MCF 10A (cell line): ENCODE measurements at regions of chr16 and their contacts with region 1.

Region 1: DNA sequence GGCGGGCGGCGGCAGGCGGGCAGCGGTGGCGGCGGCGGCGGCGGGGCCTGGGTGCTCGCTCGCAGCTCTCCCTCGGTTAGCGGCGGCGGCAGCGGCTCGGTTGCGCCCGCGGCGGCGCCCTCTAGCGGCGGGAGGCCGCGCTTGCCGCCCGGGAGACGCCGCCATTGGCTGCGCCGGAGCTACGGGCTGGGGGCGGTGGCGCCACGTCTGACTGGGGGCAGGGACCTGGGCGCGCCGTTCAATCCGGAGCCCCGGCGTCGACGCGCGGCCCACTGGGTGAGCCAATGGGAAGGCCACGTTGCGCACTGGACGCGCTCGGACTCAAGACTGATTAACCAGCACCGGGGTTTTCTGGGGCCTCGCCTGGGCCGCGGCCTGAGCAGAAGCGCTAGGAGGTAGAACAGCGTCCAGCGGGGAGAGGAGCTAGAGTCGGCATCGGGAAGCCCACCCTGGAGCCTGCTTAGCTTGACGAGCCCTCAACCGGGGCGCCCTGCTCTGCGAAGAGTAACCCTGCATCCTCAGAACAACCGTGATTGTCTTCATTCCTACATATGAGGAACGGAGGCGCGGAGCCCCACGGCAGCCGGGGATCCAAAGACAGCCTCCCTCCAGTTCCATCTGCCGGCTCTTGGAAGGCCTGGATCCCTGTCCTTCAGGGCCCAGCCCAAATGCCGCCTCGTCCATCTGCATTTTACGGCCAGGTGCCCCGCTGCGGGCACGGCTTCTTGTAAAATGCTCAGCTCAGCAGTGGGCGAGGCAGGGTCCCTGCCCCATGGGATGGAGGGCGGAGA is at the start of gene ZC3H7A:
- DNase-seq: peak; percentile 97
- H3K4me3 Mint-ChIP-seq: peak within 1 kb of the TSS; percentile 91
- H3K27ac Mint-ChIP-seq: peak within 1 kb of the TSS; percentile 99
- H3K4me1 Mint-ChIP-seq: peaks cover 32% of the 10 kb centered on the region
- H3K27me3 Mint-ChIP-seq: no peaks in the 10 kb centered on the region
- CTCF ChIP-seq: peak; percentile 81
- total RNA-seq, gene ZC3H7A: 66.9 and 74.1 TPM in 2 replicates

Region 2: GRCh38 chr16:11762431-11762830 is 34.9 kb before region 1 on chr16:
- CTCF ChIA-PET with region 1: interaction called, 6 read pairs
- POLR2A ChIA-PET with region 1: interaction called, 11 read pairs
- intact Hi-C with region 1: no loop called
- DNase-seq: peak; percentile 34
- H3K4me3 Mint-ChIP-seq: no peak overlapping the region
- H3K27ac Mint-ChIP-seq: peak overlapping the region; percentile 57
- H3K4me1 Mint-ChIP-seq: no peaks in the 10 kb centered on the region
- H3K27me3 Mint-ChIP-seq: no peaks in the 10 kb centered on the region
- CTCF ChIP-seq: no peak

Region 3: DNA sequence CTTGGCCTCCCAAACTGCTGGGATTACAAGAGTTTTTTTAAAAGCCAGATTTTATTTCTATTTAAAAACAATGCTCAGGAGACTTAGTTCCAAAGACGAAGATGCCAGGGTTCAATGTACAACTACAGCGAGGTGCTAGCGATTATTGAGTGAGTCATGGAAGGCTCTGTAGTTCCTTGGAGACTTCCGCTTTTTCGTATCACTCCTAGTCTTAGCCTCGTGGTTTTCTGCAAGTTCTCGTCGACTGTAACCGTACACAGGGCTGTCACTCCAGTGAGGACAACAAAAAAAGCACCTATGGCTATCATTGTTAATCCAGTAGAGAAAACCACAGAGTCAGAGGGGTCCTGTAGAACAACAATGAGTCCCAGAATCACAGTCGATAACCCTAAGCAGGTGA is 22.4 kb after region 1 on chr16:
- CTCF ChIA-PET with region 1: interaction called, 10 read pairs
- POLR2A ChIA-PET with region 1: interaction called, 5 read pairs
- intact Hi-C with region 1: no loop called
- DNase-seq: no peak
- H3K4me3 Mint-ChIP-seq: no peak overlapping the region
- H3K27ac Mint-ChIP-seq: no peak overlapping the region
- H3K4me1 Mint-ChIP-seq: no peaks in the 10 kb centered on the region
- H3K27me3 Mint-ChIP-seq: no peaks in the 10 kb centered on the region
- CTCF ChIP-seq: no peak

Region 4: GRCh38 chr16:11833951-11834695 is 36.8 kb after region 1 on chr16:
- CTCF ChIA-PET with region 1: interaction called, 5 read pairs
- POLR2A ChIA-PET with region 1: interaction called, 27 read pairs
- intact Hi-C with region 1: no loop called
- DNase-seq: peak; percentile 92
- H3K4me3 Mint-ChIP-seq: peak overlapping the region; percentile 63
- H3K27ac Mint-ChIP-seq: peak overlapping the region; percentile 98
- H3K4me1 Mint-ChIP-seq: peaks cover 19% of the 10 kb centered on the region
- H3K27me3 Mint-ChIP-seq: no peaks in the 10 kb centered on the region
- CTCF ChIP-seq: no peak